ENCODE measurements at regions of chr21 and their contacts with region 1.

Region 1: GRCh38 chr21:45119812-45120211 is 45.4 kb downstream of the ADARB1 start:
- DNase-seq: no peak

Region 2: GRCh38 chr21:43834146-43834905 is 1285.5 kb before region 1 on chr21:
- intact Hi-C with region 1: no loop called
- DNase-seq: peak; percentile 76

Region 3: DNA sequence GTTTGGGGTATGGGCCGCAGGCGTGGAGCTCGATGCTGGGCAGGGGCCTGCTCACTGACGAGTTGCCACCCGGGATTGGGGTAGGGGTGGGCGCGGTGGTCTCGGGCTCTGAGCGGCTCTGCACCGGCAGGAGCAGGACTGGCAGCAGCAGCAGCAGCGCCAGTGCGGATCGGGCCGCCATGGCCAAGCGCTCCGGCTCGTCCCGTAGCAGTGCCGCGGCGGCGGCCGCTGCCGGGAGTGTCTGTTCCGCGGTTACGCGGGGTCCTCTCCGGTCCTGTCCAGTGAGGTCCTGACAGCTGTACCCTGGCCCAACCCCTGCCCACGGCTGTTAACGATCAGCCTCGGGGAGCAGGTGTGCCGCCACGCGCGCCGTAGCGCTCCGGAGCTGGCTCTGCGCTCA is 18.9 kb before region 1 on chr21:
- intact Hi-C with region 1: loop called in 1 of 2 experiments (anchors 1 kb)
- DNase-seq: no peak